ENCODE measurements at regions of chr2 and their contacts with region 1.

Region 1: DNA sequence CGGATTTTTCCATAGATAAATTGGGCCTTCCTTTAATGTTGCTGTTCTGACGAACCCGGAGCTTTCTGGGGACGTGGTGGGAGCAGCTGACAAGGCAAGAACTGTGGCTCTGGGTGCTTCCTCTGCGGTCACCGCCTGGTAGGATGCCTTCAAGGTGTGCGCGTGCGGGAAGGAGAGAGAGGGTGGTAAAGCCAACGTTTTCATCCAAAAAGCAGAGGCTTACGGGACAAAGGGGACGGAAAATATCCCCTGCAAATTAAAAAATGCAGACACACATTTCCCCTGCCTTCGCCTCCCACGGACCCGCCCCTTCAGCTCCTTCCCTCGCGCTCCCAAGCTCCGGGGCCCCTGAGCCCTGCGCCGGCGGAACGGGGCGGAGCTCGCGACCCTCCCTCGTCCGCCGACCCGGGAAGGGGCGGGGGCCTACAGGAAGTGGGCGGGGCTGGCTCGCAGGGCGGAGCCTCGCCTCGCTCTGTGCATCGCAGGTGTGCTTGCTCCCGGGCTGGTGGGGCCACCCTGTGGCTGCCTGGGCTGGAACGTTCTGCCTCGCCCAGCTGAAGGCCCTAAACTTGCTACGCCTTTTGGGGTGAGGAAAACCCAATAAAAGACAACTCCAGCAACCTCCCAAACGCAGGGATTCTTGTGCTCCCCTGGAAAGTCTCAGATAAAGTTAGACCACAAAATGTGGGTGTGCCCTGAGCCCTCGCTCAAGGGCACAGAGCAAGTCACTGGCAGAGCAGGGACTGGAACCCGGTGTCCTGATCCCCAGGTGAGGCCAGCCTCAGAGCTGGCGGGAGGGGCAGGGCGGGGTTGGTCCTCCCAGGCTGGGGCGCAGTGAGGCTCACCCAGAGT is 25.4 kb upstream of the SLC66A3 start:
- DNase-seq: peak; percentile 81
- ATAC-seq: peak; percentile 86
- H3K4me3 Mint-ChIP-seq: peak overlapping the region; percentile 67
- H3K27ac Mint-ChIP-seq: no peak overlapping the region
- H3K4me1 Mint-ChIP-seq: peaks cover 36% of the 10 kb centered on the region
- H3K27me3 Mint-ChIP-seq: peaks cover 12% of the 10 kb centered on the region

Region 2: GRCh38 chr2:10832203-10832936 is 297.5 kb before region 1 on chr2:
- CTCF ChIA-PET with region 1: interaction called, 51 read pairs
- POLR2A ChIA-PET with region 1: no interaction called
- DNase-seq: peak; percentile 86
- ATAC-seq: peak; percentile 88
- H3K4me3 Mint-ChIP-seq: no peak overlapping the region
- H3K27ac Mint-ChIP-seq: no peak overlapping the region
- H3K4me1 Mint-ChIP-seq: peaks cover 5% of the 10 kb centered on the region
- H3K27me3 Mint-ChIP-seq: peaks cover 13% of the 10 kb centered on the region

Region 3: GRCh38 chr2:11154923-11155380 is 25.1 kb after region 1 on chr2:
- CTCF ChIA-PET with region 1: interaction called, 11 read pairs
- POLR2A ChIA-PET with region 1: interaction called, 5 read pairs
- DNase-seq: peak; percentile 98
- ATAC-seq: peak; percentile 95
- H3K4me3 Mint-ChIP-seq: peak overlapping the region; percentile 75
- H3K27ac Mint-ChIP-seq: peak overlapping the region; percentile 87
- H3K4me1 Mint-ChIP-seq: peaks cover 15% of the 10 kb centered on the region
- H3K27me3 Mint-ChIP-seq: no peaks in the 10 kb centered on the region

Region 4: DNA sequence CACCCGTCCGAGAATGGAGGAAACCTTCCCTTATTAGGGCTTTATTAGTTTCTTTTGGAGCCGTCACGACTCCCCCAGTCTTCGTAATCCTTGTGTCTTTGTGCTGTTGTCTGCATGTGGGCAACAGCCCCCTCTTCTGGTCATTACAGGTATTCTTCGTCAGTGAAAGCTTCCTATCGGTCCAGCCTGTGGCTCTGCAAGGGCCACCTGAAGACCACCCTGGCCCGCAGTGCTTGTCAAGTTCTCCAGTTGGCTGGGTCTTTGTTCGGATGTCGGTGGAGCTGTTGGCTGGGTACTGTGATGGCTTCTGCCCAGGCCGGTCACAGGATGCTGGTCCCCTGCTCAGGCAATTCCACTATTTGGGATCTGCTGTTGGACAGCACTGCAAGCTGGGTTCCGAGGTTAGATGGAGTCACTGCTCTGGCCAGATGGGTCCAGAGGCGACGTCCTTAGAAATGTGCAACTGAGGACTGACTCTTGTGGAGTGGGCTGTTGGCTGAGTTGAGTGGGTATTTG is 317.0 kb after region 1 on chr2:
- CTCF ChIA-PET with region 1: interaction called, 24 read pairs
- POLR2A ChIA-PET with region 1: no interaction called
- DNase-seq: peak; percentile 61
- ATAC-seq: peak; percentile 55
- H3K4me3 Mint-ChIP-seq: no peak overlapping the region
- H3K27ac Mint-ChIP-seq: no peak overlapping the region
- H3K4me1 Mint-ChIP-seq: no peaks in the 10 kb centered on the region
- H3K27me3 Mint-ChIP-seq: no peaks in the 10 kb centered on the region

Region 5: GRCh38 chr2:11477994-11478393 is 348.2 kb after region 1 on chr2:
- CTCF ChIA-PET with region 1: interaction called, 15 read pairs
- POLR2A ChIA-PET with region 1: no interaction called
- DNase-seq: peak; percentile 88
- ATAC-seq: peak; percentile 74
- H3K4me3 Mint-ChIP-seq: no peak overlapping the region
- H3K27ac Mint-ChIP-seq: no peak overlapping the region
- H3K4me1 Mint-ChIP-seq: peaks cover under 1% of the 10 kb centered on the region
- H3K27me3 Mint-ChIP-seq: peaks cover 25% of the 10 kb centered on the region

Measured in activated CD8-positive, alpha-beta T cell treated with anti-CD3 and anti-CD28 coated beads, Interleukin-2, amount 10 ng/mL, durations not matched to agents 7 days and 5 days (primary cell).